GM12878 (cell line): ENCODE measurements at regions of chr4 and their contacts with region 1.

Region 1: GRCh38 chr4:26161030-26161824 is 159.6 kb upstream of the RBPJ start:
- DNase-seq: no peak
- ATAC-seq: peak; percentile 65
- H3K4me3 ChIP-seq: no peak overlapping the region
- H3K27ac ChIP-seq: no peak overlapping the region
- H3K4me1 ChIP-seq: no peaks in the 10 kb centered on the region
- H3K27me3 ChIP-seq: no peaks in the 10 kb centered on the region
- CTCF ChIP-seq: peak; percentile 12 to 27 (median 16); a peak in 2 of 6 replicates
- EP300 ChIP-seq: no peak
- POLR2A ChIP-seq: no peak
- RAD21 ChIP-seq: peak; percentile 64

Region 2: DNA sequence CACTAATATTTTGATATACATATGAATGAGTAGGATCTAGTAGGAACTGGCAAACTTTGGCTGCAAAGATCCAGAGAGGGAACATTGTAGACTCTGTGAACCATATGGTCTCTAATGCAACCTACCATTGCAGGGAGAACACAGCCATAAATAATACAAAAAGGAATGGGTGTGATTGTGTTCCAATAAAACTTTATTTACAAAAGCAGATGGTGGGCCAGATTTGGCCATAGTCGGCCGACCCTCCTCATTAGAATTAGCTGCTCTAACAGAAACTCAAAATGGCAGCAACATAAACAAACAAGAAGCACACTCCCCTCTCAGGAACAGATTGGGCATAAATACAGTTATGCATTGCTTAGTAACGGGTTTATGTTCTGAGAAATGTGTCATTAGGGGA is 38.5 kb before region 1 on chr4:
- CTCF ChIA-PET with region 1: no interaction called
- POLR2A ChIA-PET with region 1: no interaction called
- RAD21 ChIA-PET with region 1: no interaction called
- SMC1A ChIA-PET with region 1: no interaction called
- in situ Hi-C with region 1: no loop called
- intact Hi-C with region 1: no loop called
- DNase-seq: no peak
- ATAC-seq: no peak
- H3K4me3 ChIP-seq: no peak overlapping the region
- H3K27ac ChIP-seq: no peak overlapping the region
- H3K4me1 ChIP-seq: peaks cover 16% of the 10 kb centered on the region
- H3K27me3 ChIP-seq: no peaks in the 10 kb centered on the region
- CTCF ChIP-seq: no peak
- EP300 ChIP-seq: no peak
- POLR2A ChIP-seq: no peak
- RAD21 ChIP-seq: no peak

Region 3: GRCh38 chr4:26171941-26172340 is 10.7 kb after region 1 on chr4:
- CTCF ChIA-PET with region 1: interaction called, 11 read pairs
- POLR2A ChIA-PET with region 1: no interaction called
- RAD21 ChIA-PET with region 1: interaction called, 6 read pairs
- SMC1A ChIA-PET with region 1: interaction called, 8 read pairs
- in situ Hi-C with region 1: no loop called
- intact Hi-C with region 1: no loop called
- DNase-seq: no peak
- ATAC-seq: no peak
- H3K4me3 ChIP-seq: no peak overlapping the region
- H3K27ac ChIP-seq: no peak overlapping the region
- H3K4me1 ChIP-seq: peaks cover 14% of the 10 kb centered on the region
- H3K27me3 ChIP-seq: no peaks in the 10 kb centered on the region
- CTCF ChIP-seq: no peak
- EP300 ChIP-seq: no peak
- POLR2A ChIP-seq: no peak
- RAD21 ChIP-seq: no peak

Region 4: GRCh38 chr4:26235500-26235899 is 74.3 kb after region 1 on chr4:
- CTCF ChIA-PET with region 1: no interaction called
- POLR2A ChIA-PET with region 1: no interaction called
- RAD21 ChIA-PET with region 1: no interaction called
- SMC1A ChIA-PET with region 1: no interaction called
- in situ Hi-C with region 1: no loop called
- intact Hi-C with region 1: no loop called
- DNase-seq: no peak
- ATAC-seq: no peak
- H3K4me3 ChIP-seq: no peak overlapping the region
- H3K27ac ChIP-seq: no peak overlapping the region
- H3K4me1 ChIP-seq: no peaks in the 10 kb centered on the region
- H3K27me3 ChIP-seq: no peaks in the 10 kb centered on the region
- CTCF ChIP-seq: no peak
- EP300 ChIP-seq: no peak
- POLR2A ChIP-seq: no peak
- RAD21 ChIP-seq: no peak

Region 5: GRCh38 chr4:27350161-27350560 is 1188.9 kb after region 1 on chr4:
- CTCF ChIA-PET with region 1: no interaction called
- POLR2A ChIA-PET with region 1: no interaction called
- RAD21 ChIA-PET with region 1: no interaction called
- SMC1A ChIA-PET with region 1: no interaction called
- in situ Hi-C with region 1: no loop called
- intact Hi-C with region 1: no loop called
- DNase-seq: no peak
- ATAC-seq: no peak
- H3K4me3 ChIP-seq: no peak overlapping the region
- H3K27ac ChIP-seq: no peak overlapping the region
- H3K4me1 ChIP-seq: no peaks in the 10 kb centered on the region
- H3K27me3 ChIP-seq: no peaks in the 10 kb centered on the region
- CTCF ChIP-seq: no peak
- EP300 ChIP-seq: no peak
- POLR2A ChIP-seq: no peak
- RAD21 ChIP-seq: no peak